ENCODE measurements at regions of chr1 and their contacts with region 1.

Region 1: DNA sequence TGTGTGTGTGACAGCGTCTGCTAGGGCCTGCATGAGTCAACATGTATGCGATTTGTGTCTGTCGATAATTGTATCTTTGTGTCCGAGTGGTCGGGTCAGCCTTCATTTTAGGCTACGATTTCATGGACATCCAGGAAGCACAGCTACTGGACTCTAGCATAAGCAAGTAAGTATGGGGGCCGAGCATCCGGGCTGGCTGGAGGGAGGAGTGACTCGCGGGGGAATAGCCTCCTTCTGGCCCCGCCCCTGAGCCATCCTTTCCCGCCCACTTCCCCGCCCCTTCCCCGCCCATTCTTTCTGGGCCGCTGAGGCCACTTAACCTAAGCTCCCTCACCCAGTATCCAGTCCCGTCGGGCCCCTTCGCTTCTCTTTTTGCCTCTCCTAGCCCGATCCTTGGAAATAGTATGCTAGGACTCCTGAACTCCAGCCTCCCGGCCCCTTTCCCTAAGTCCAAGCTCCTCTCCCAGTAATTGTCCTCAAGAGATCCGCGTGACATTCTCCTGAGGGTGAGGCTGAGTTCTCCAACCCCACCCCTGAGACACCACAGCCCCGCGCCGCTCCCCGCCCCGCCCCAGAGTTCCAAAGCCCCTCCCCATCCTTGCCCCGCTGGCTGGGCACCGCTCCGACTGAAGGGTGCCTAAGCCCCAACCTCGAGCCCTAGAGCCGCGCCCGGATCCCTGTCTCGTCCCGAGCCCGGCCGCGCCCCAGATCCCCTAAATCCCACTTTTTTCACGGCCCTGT is 1.2 kb downstream of the MAP3K6 start:
- DNase-seq: peak; percentile 51 to 80
- H3K4me3 ChIP-seq: peak overlapping the region; percentile 70
- H3K27ac ChIP-seq: no peak overlapping the region
- H3K4me1 ChIP-seq: peaks cover 9% of the 10 kb centered on the region; the same call in 1 of the 2 replicates
- H3K27me3 ChIP-seq: no peaks in the 10 kb centered on the region
- CTCF ChIP-seq: no peak

Region 2: GRCh38 chr1:26932531-26932930 is 433.0 kb before region 1 on chr1:
- CTCF ChIA-PET with region 1: no interaction called
- POLR2A ChIA-PET with region 1: interaction called, 17 read pairs
- intact Hi-C with region 1: no loop called
- DNase-seq: no peak
- H3K4me3 ChIP-seq: no peak overlapping the region
- H3K27ac ChIP-seq: no peak overlapping the region
- H3K4me1 ChIP-seq: no peaks in the 10 kb centered on the region
- H3K27me3 ChIP-seq: no peaks in the 10 kb centered on the region
- CTCF ChIP-seq: no peak

Region 3: GRCh38 chr1:27071049-27071416 is 294.5 kb before region 1 on chr1:
- CTCF ChIA-PET with region 1: no interaction called
- POLR2A ChIA-PET with region 1: no interaction called
- intact Hi-C with region 1: no loop called
- DNase-seq: no peak
- H3K4me3 ChIP-seq: no peak overlapping the region
- H3K27ac ChIP-seq: no peak overlapping the region
- H3K4me1 ChIP-seq: no peaks in the 10 kb centered on the region
- H3K27me3 ChIP-seq: no peaks in the 10 kb centered on the region
- CTCF ChIP-seq: no peak

Region 4: GRCh38 chr1:27321813-27322577 is 43.5 kb before region 1 on chr1 and contains the start of gene TMEM222:
- CTCF ChIA-PET with region 1: no interaction called
- POLR2A ChIA-PET with region 1: no interaction called
- intact Hi-C with region 1: loop called (anchors 5 kb)
- DNase-seq: peak; percentile 87 to 96
- H3K4me3 ChIP-seq: peak within 1 kb of the TSS; percentile 90
- H3K27ac ChIP-seq: peak within 1 kb of the TSS; percentile 51
- H3K4me1 ChIP-seq: peaks cover 9% of the 10 kb centered on the region
- H3K27me3 ChIP-seq: no peaks in the 10 kb centered on the region
- CTCF ChIP-seq: no peak
- total RNA-seq, gene TMEM222: 32.0 and 32.8 TPM in 2 replicates

Region 5: DNA sequence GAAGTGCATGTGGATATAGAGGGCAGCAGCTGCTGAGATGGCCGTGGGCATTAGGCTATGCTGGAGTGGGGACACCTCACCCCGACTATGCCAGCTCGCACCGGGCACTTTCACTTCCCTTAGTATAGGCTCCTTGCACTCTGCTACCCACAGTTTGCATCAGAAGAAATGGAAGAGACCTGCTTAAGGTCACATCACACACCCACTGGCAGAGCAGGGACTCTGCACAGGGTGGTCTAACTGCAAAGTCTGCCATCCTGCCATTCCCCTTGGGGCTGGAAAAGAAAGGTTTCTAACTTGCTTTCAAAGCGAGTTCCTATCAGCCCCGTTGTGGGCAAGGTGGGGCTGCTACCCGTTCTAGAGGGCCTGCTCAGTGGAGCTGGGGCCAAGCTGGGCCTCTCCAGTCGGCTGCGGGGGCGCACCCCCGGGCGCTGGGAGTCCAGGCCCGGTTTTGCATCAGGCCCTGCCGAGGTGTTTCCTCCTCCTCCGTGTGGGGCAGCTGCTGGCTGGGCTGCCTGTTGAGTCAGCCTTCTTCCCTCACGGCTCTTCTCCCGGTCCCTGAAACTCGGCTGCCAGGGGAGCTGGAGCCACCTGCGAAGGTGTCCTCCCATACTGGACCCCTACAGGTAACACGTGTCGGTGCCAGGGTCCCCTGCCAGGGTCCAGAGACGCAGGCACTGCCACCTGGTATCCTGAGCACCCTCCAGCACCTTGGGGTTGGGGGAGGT is 23.9 kb before region 1 on chr1 and contains the start of gene SYTL1:
- CTCF ChIA-PET with region 1: interaction called, 3 read pairs
- POLR2A ChIA-PET with region 1: interaction called, 24 read pairs
- intact Hi-C with region 1: loop called (anchors 1 kb)
- DNase-seq: peak; percentile 64 to 82
- H3K4me3 ChIP-seq: peak within 1 kb of the TSS; percentile 70
- H3K27ac ChIP-seq: peak within 1 kb of the TSS; percentile 77
- H3K4me1 ChIP-seq: peaks cover 24% of the 10 kb centered on the region
- H3K27me3 ChIP-seq: no peaks in the 10 kb centered on the region
- CTCF ChIP-seq: no peak
- total RNA-seq, gene SYTL1: 43.7 and 49.8 TPM in 2 replicates

Region 6: DNA sequence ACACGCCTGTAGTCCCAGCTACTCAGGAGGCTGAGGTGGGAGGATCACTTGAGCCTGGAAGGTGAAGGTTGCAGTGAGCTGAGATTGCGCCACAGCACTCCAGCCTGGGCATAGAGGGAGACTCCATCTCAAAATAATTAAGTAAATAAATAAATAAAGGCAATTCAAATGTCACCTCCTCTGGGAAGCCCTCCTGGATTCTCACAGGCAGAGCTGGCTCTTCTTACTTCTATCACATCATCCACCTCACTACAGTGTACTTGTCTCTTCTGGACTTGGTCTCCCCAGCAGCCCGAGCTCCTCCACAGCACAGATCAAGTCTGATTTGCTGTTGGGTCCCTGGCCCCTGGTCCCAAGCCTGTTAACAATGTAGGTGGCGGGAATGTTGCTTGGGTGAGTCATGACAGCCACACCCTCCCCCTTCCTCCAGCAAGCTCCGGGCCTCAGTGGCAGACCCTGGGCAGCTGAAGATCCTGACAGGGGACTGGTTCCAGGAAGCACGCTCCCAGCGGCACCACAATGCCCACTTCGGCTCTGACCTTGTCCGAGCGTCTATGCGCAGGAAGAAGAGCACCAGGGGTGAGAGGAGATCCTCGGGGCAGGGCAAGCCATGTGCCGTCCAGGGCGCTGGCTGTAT is 18.4 kb before region 1 on chr1:
- CTCF ChIA-PET with region 1: no interaction called
- POLR2A ChIA-PET with region 1: interaction called, 24 read pairs
- intact Hi-C with region 1: loop called (anchors 1 kb)
- DNase-seq: peak in 1 of 2 experiments; percentile 19
- H3K4me3 ChIP-seq: no peak overlapping the region
- H3K27ac ChIP-seq: no peak overlapping the region
- H3K4me1 ChIP-seq: peaks cover 11% of the 10 kb centered on the region
- H3K27me3 ChIP-seq: no peaks in the 10 kb centered on the region
- CTCF ChIP-seq: no peak

Region 7: DNA sequence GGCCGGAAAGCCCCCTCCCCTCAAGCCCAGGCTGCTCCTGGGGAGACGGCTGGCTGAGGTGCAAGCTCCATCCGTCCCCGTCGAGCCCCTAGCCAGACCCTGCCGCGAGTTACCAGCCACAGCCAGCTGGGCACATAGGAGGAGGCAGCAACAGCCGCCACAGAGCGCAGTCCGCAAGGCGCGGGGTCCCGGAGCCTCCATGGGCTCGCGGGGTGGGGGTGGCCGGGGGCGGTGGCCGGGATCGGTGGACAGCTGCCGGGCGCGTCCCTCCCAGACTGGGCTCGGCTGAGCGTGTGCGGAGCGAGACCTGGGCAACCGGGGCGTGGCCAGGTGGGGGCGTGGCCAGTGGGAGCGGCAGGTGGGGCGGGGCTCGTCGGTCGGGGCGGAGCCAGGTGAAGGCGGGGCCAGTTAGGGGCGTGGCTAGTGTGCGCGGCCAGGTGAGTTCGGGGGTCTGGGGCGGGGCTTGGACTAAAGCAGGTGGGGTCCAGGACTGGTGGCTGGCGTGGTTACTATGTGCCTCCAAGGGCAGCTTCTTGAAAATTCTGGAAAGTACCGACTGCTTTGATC is 17.6 kb after region 1 on chr1 and contains the start of gene CD164L2:
- CTCF ChIA-PET with region 1: interaction called, 7 read pairs
- POLR2A ChIA-PET with region 1: no interaction called
- intact Hi-C with region 1: loop called (anchors 2 kb)
- DNase-seq: peak in 1 of 2 experiments; percentile 73
- H3K4me3 ChIP-seq: no peak within 1 kb of the TSS
- H3K27ac ChIP-seq: no peak within 1 kb of the TSS
- H3K4me1 ChIP-seq: no peaks in the 10 kb centered on the region
- H3K27me3 ChIP-seq: no peaks in the 10 kb centered on the region
- CTCF ChIP-seq: no peak
- total RNA-seq, gene CD164L2: 0.63 and 1.7 TPM in 2 replicates

Measured in PC-9 (cell line).